ENCODE measurements at regions of chr16 and their contacts with region 1.

Region 1: DNA sequence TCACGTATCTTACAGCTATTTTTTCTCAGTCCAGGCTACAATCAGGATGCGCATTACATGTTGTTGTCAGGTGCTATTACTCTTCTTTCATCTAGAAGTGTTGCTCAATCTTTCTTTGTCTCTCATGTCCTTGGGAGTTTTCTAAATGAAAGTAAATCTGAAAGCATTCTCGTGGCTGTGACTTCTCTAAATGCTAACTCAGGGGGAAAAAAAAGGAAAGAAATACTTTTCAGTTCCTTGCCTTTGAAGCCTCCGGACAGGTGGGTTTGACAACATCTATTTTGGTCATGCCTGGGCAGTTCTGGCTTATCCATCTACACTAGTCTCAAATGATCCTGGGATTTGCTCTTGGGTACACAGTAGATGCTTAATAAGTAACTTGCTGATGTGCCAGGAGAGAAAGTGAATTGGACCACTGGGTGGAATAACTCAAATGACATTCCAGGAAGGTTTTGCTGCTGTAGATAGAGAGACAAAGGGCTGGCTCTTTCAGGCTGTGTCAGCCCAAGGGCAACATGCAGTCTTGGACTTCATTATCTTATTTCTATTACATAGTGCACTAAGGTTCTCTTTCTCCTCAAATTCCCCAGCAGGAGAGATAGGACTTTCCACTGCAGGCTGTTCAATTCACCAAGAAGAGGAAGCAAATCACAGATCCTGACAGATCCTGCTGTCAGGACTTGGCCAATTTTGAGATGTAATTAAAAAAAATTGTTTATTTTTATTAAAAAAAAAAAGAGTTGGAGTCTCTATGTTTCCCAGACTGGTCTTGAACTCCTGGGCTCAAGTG is 63.6 kb upstream of the NFAT5 start:
- DNase-seq: peak; percentile 30 to 69 (median 66)
- H3K4me3 ChIP-seq: no peak overlapping the region
- H3K4me3 Mint-ChIP-seq: peak overlapping the region in 1 of 2 donors; percentile 76
- H3K27ac ChIP-seq: no peak overlapping the region
- H3K27ac Mint-ChIP-seq: peak overlapping the region in 4 of 7 donors; percentile 8 to 65 (median 46)
- H3K4me1 ChIP-seq: peaks cover 6 to 9% of the 10 kb centered on the region in 2 donors
- H3K4me1 Mint-ChIP-seq: peaks cover 9% of the 10 kb centered on the region
- H3K27me3 ChIP-seq: peaks cover 7 to 47% of the 10 kb centered on the region in 2 donors
- H3K27me3 Mint-ChIP-seq: peaks cover 51 to 75% (median 58%) of the 10 kb centered on the region in 3 donors
- CTCF ChIP-seq: no peak

Region 2: GRCh38 chr16:69542974-69543373 is 40.8 kb after region 1 on chr16:
- intact Hi-C with region 1: loop called in 1 of 2 experiments (anchors 5 kb)
- DNase-seq: no peak
- H3K4me3 ChIP-seq: no peak overlapping the region
- H3K4me3 Mint-ChIP-seq: no peak overlapping the region
- H3K27ac ChIP-seq: no peak overlapping the region
- H3K27ac Mint-ChIP-seq: no peak overlapping the region
- H3K4me1 ChIP-seq: peaks cover 33 to 34% of the 10 kb centered on the region in 2 donors
- H3K4me1 Mint-ChIP-seq: peaks cover 28% of the 10 kb centered on the region
- H3K27me3 ChIP-seq: no peaks in the 10 kb centered on the region
- H3K27me3 Mint-ChIP-seq: peaks cover 2 to 10% (median 8%) of the 10 kb centered on the region in 3 donors
- CTCF ChIP-seq: no peak

Measured in CD14-positive monocyte (primary cell).